Mammary epithelial cell (primary cell): ENCODE measurements at regions of chr2 and their contacts with region 1.

Region 1: GRCh38 chr2:84631047-84631446 is 114.7 kb downstream of the DNAH6 start:
- DNase-seq: peak; percentile 24
- H3K4me3 ChIP-seq: no peak overlapping the region
- H3K27ac ChIP-seq: no peak overlapping the region
- H3K4me1 ChIP-seq: no peaks in the 10 kb centered on the region
- H3K27me3 ChIP-seq: no peaks in the 10 kb centered on the region
- CTCF ChIP-seq: peak; percentile 65 to 69

Region 2: DNA sequence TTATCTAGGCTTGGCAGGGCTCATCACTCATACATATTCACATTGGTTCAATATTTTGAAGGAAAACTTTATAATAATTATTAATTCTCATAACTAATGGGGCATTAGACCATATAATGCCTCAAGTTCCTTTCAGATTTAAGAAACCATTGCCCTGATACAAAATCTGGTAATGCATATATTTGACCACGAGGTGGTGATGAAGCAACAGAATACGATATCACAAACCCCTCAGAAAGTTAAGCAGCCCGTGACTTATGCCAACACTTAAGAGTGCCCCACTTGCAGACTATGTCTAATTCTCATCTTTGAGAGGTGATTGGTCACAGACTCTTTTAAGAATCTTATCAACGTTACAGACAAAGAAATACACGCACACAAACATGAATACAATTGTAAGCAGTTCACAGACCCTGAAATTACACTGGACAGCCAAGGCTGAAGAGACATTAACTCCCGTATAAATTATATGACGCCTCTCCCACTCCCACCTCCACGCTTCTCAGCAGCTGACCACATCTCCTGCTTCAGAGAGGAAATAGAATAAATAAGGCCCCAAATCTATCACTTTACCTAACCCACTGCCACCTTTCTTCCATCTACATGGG is 135.4 kb before region 1 on chr2:
- CTCF ChIA-PET with region 1: interaction called, 7 read pairs
- dilution Hi-C with region 1: no loop called
- in situ Hi-C with region 1: no loop called
- intact Hi-C with region 1: loop called (anchors 1 kb)
- DNase-seq: peak; percentile 39
- H3K4me3 ChIP-seq: no peak overlapping the region
- H3K27ac ChIP-seq: no peak overlapping the region
- H3K4me1 ChIP-seq: peaks cover 2% of the 10 kb centered on the region
- H3K27me3 ChIP-seq: no peaks in the 10 kb centered on the region
- CTCF ChIP-seq: peak; percentile 49 to 56

Region 3: GRCh38 chr2:84526562-84526961 is 104.5 kb before region 1 on chr2:
- CTCF ChIA-PET with region 1: no interaction called
- dilution Hi-C with region 1: no loop called
- in situ Hi-C with region 1: no loop called
- intact Hi-C with region 1: loop called (anchors 1 kb)
- DNase-seq: no peak
- H3K4me3 ChIP-seq: no peak overlapping the region
- H3K27ac ChIP-seq: no peak overlapping the region
- H3K4me1 ChIP-seq: no peaks in the 10 kb centered on the region
- H3K27me3 ChIP-seq: no peaks in the 10 kb centered on the region
- CTCF ChIP-seq: peak in 1 of 2 donors; percentile 33

Region 4: GRCh38 chr2:84865181-84865783 is 234.2 kb after region 1 on chr2:
- CTCF ChIA-PET with region 1: no interaction called
- dilution Hi-C with region 1: no loop called
- in situ Hi-C with region 1: loop called in 1 of 2 experiments (anchors 25 kb)
- intact Hi-C with region 1: loop called (anchors 1 kb)
- DNase-seq: peak; percentile 34
- H3K4me3 ChIP-seq: no peak overlapping the region
- H3K27ac ChIP-seq: no peak overlapping the region
- H3K4me1 ChIP-seq: no peaks in the 10 kb centered on the region
- H3K27me3 ChIP-seq: no peaks in the 10 kb centered on the region
- CTCF ChIP-seq: peak; percentile 40 to 41